ENCODE measurements at regions of chr7 and their contacts with region 1.

Region 1: GRCh38 chr7:45026984-45027773 is 27.2 kb downstream of the CCM2 start:
- DNase-seq: peak; percentile 54
- H3K4me3 Mint-ChIP-seq: peak overlapping the region; percentile 82
- H3K27ac Mint-ChIP-seq: peak overlapping the region; percentile 95
- H3K4me1 Mint-ChIP-seq: peaks cover 63% of the 10 kb centered on the region
- H3K27me3 Mint-ChIP-seq: no peaks in the 10 kb centered on the region

Region 2: GRCh38 chr7:44999245-45000095 is 27.7 kb before region 1 on chr7:
- CTCF ChIA-PET with region 1: interaction called, 21 read pairs
- DNase-seq: peak; percentile 100
- H3K4me3 Mint-ChIP-seq: peak overlapping the region; percentile 92
- H3K27ac Mint-ChIP-seq: peak overlapping the region; percentile 94
- H3K4me1 Mint-ChIP-seq: peaks cover 61% of the 10 kb centered on the region
- H3K27me3 Mint-ChIP-seq: no peaks in the 10 kb centered on the region

Measured in activated naive CD4-positive, alpha-beta T cell treated with anti-CD3 and anti-CD28 coated beads, Interleukin-2, amount 10 ng/mL, durations not matched to agents 7 days and 5 days (primary cell).